ENCODE measurements at regions of chr2 and their contacts with region 1.

Region 1: DNA sequence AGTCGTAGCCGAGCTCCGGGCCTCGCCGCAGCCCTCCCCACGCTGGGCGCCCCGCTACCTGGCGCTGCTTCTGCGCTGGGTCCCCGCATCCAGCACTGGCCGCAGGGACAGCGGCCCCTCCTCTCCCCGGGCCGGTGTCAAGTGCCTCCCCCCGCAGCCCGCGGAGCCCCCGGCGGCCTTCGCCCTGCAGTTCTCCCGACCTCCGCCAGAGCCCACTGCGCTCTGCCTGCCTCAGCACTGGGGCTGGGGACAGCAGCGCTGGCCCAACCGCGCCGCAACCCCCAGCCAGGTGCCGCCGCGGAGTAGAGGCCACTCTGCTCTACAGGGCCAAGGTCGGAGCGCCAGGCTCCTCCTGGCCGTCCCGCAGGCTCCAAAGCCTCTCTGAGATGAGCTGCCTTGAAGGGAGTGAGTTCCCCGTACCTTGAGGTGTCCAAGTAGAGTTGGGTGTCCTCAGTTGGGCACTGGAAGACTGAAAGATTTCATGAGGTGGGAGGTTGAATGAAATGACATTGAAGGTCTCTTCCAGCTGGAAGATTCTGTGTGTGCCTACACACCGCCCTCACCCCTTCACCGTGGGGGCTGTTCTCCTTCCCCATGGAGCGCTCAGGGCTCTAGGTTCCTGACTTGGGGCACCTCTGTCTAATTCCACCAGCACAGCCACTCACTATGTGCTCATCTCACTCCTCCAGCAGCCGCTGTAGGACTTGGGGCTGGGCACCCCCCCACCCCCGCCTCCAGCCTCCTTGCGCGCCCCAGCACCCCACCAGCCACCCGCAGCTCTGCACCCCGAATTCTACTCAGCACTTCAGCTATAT is 854 bp upstream of the DNMT3A start:
- DNase-seq: peak; percentile 67 to 88 (median 77)
- ATAC-seq: peak; percentile 95
- H3K4me3 ChIP-seq: peak overlapping the region; percentile 56
- H3K4me3 Mint-ChIP-seq: peak overlapping the region; percentile 68 to 88 (median 78)
- H3K27ac ChIP-seq: no peak overlapping the region
- H3K27ac Mint-ChIP-seq: peak overlapping the region in 6 of 9 donors; percentile 10 to 89 (median 56)
- H3K4me1 ChIP-seq: peaks cover 5 to 29% of the 10 kb centered on the region in 2 donors
- H3K4me1 Mint-ChIP-seq: peaks cover 18 to 30% (median 27%) of the 10 kb centered on the region in 7 donors
- H3K27me3 ChIP-seq: no peaks in the 10 kb centered on the region
- H3K27me3 Mint-ChIP-seq: no peaks in the 10 kb centered on the region

Region 2: GRCh38 chr2:25294573-25295462 is 47.8 kb before region 1 on chr2:
- CTCF ChIA-PET with region 1: no interaction called
- POLR2A ChIA-PET with region 1: interaction called, 3 read pairs
- intact Hi-C with region 1: loop called (anchors 1 to 5 kb)
- DNase-seq: peak; percentile 51 to 79 (median 73)
- ATAC-seq: peak; percentile 89
- H3K4me3 ChIP-seq: peak overlapping the region; percentile 46
- H3K4me3 Mint-ChIP-seq: peak overlapping the region; percentile 72 to 85 (median 82)
- H3K27ac ChIP-seq: peak overlapping the region; percentile 81
- H3K27ac Mint-ChIP-seq: peak overlapping the region; percentile 90 to 99 (median 97)
- H3K4me1 ChIP-seq: peaks cover 31 to 61% of the 10 kb centered on the region in 2 donors
- H3K4me1 Mint-ChIP-seq: peaks cover 39 to 75% (median 55%) of the 10 kb centered on the region in 7 donors
- H3K27me3 ChIP-seq: no peaks in the 10 kb centered on the region
- H3K27me3 Mint-ChIP-seq: no peaks in the 10 kb centered on the region

Region 3: DNA sequence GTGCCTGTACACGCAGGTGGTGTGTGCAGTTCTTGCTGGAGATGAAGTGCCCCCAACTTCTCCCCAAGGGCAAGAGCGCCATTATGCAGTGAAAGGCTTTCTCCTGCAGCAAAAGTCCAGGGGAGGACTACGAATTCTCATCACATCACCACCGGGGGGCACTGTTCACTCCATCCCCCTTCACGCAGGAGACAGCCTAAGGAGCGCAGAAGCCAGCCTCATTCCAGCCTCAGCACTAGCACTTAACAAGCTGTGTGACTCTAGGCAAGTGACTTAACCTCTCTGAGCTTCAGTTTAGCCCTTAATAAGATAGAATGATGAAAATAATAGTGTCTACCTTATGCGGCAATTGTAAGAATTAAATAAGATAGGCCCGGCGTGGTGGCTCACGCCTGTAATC is 33.2 kb before region 1 on chr2:
- CTCF ChIA-PET with region 1: interaction called, 18 read pairs
- POLR2A ChIA-PET with region 1: interaction called, 6 read pairs
- intact Hi-C with region 1: loop called (anchors 1 kb)
- DNase-seq: peak; percentile 48 to 70 (median 62)
- ATAC-seq: peak; percentile 72
- H3K4me3 ChIP-seq: no peak overlapping the region
- H3K4me3 Mint-ChIP-seq: peak overlapping the region in 5 of 10 donors; percentile 13 to 47 (median 28)
- H3K27ac ChIP-seq: no peak overlapping the region
- H3K27ac Mint-ChIP-seq: peak overlapping the region in 8 of 9 donors; percentile 36 to 89 (median 66)
- H3K4me1 ChIP-seq: peaks cover 21 to 60% of the 10 kb centered on the region in 2 donors
- H3K4me1 Mint-ChIP-seq: peaks cover 48 to 95% (median 80%) of the 10 kb centered on the region in 7 donors
- H3K27me3 ChIP-seq: no peaks in the 10 kb centered on the region
- H3K27me3 Mint-ChIP-seq: no peaks in the 10 kb centered on the region

Region 4: DNA sequence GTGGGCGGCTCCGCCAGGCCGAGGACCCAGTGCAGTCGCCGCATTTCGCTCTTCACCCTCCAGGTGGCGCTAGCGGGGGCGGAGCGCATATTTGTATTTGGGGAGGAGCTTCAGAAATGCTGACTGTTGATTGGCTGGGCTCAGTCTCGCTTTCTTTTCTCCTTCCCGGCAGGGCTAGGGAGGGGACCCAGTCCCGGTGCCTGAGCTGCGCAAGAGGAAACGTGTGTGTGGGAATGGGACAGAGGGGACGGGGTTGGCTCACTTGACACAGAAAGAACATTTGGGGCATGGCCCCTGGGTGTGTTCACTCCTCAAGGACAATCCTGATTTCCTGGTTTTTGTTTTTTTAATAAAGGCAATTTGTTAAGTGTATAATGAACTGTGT is 19.5 kb after region 1 on chr2:
- CTCF ChIA-PET with region 1: interaction called, 4 read pairs
- POLR2A ChIA-PET with region 1: interaction called, 14 read pairs
- intact Hi-C with region 1: loop called (anchors 1 kb)
- DNase-seq: peak; percentile 86 to 99 (median 93)
- ATAC-seq: peak; percentile 98
- H3K4me3 ChIP-seq: peak overlapping the region; percentile 78
- H3K4me3 Mint-ChIP-seq: peak overlapping the region; percentile 83 to 95 (median 89)
- H3K27ac ChIP-seq: peak overlapping the region; percentile 81
- H3K27ac Mint-ChIP-seq: peak overlapping the region; percentile 84 to 96 (median 92)
- H3K4me1 ChIP-seq: peaks cover 3 to 4% of the 10 kb centered on the region in 2 donors
- H3K4me1 Mint-ChIP-seq: peaks cover 11 to 32% (median 25%) of the 10 kb centered on the region in 7 donors
- H3K27me3 ChIP-seq: no peaks in the 10 kb centered on the region
- H3K27me3 Mint-ChIP-seq: no peaks in the 10 kb centered on the region

Region 5: GRCh38 chr2:25567406-25567805 is 224.8 kb after region 1 on chr2:
- CTCF ChIA-PET with region 1: no interaction called
- POLR2A ChIA-PET with region 1: no interaction called
- intact Hi-C with region 1: loop called in 1 of 2 experiments (anchors 1 kb)
- DNase-seq: peak in 4 of 9 donors; percentile 6 to 27 (median 16)
- ATAC-seq: peak; percentile 67
- H3K4me3 ChIP-seq: no peak overlapping the region
- H3K4me3 Mint-ChIP-seq: no peak overlapping the region
- H3K27ac ChIP-seq: no peak overlapping the region
- H3K27ac Mint-ChIP-seq: peak overlapping the region in 1 of 9 donors; percentile 47
- H3K4me1 ChIP-seq: no peaks in the 10 kb centered on the region
- H3K4me1 Mint-ChIP-seq: peaks cover 0 to 14% (median 4%) of the 10 kb centered on the region in 7 donors
- H3K27me3 ChIP-seq: no peaks in the 10 kb centered on the region
- H3K27me3 Mint-ChIP-seq: no peaks in the 10 kb centered on the region